WTC11 (cell line): ENCODE measurements at regions of chr1 and their contacts with region 1.

Region 1: GRCh38 chr1:226121587-226122400 is 59.3 kb downstream of the H3-3A start:
- DNase-seq: peak; percentile 89
- ATAC-seq: peak; percentile 74
- H3K4me3 Mint-ChIP-seq: peak overlapping the region; percentile 83
- H3K27ac Mint-ChIP-seq: no peak overlapping the region
- H3K4me1 Mint-ChIP-seq: peaks cover 49% of the 10 kb centered on the region
- H3K27me3 Mint-ChIP-seq: peaks cover 20% of the 10 kb centered on the region
- CTCF ChIP-seq: peak; percentile 93

Region 2: DNA sequence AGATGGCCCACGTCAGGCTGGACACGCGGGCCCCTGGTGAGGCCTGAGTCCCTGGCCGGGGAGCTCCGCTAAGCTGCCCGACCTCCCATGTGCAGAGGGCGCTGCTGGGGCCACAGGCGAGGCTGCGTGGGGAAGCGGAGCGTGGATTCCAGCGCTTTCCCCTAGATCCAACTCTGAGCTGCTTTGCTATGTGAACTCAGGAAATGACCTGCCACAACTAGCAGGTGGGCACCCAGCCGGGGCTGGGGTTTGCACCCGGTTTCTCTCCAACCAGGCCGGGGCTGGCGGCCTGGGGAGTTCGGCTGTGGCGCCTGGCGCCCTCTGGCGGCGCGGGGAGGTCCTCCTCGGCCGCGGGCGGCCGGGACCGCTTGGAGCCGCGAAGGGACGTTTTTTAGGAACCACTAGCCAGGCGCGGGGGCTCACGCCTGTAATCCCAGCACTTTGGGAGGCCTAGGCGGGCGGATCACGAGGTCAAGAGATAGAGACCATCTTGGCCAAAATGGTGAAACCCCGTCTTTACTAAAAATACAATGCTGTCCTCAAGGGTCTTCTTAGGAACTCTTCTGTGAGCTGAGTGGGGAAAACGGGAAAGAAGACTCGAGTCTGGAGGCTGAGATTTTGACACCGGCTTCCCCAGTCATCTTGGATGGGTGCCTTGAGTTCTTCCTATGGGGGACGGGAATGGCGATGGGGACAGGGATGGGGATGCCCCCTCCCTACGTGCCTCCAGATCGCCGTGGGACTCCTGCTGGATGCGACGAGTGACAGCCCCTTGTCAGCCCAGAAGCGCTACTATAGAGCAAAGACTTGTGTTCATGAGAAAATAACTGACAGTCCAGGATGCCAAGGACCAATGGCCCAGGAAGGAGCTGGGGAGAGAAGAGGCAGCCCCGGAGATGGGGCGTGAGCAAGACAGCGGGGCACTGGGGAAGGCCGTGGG is 210.3 kb before region 1 on chr1:
- CTCF ChIA-PET with region 1: no interaction called
- POLR2A ChIA-PET with region 1: no interaction called
- DNase-seq: peak; percentile 84
- ATAC-seq: peak; percentile 82
- H3K4me3 Mint-ChIP-seq: no peak overlapping the region
- H3K27ac Mint-ChIP-seq: no peak overlapping the region
- H3K4me1 Mint-ChIP-seq: peaks cover 43% of the 10 kb centered on the region
- H3K27me3 Mint-ChIP-seq: peaks cover 12% of the 10 kb centered on the region
- CTCF ChIP-seq: peak; percentile 93

Region 3: GRCh38 chr1:226100436-226101391 is 21.1 kb before region 1 on chr1:
- CTCF ChIA-PET with region 1: interaction called, 23 read pairs
- POLR2A ChIA-PET with region 1: no interaction called
- DNase-seq: peak; percentile 61
- ATAC-seq: peak; percentile 47
- H3K4me3 Mint-ChIP-seq: peak overlapping the region; percentile 76
- H3K27ac Mint-ChIP-seq: no peak overlapping the region
- H3K4me1 Mint-ChIP-seq: peaks cover 39% of the 10 kb centered on the region
- H3K27me3 Mint-ChIP-seq: peaks cover 17% of the 10 kb centered on the region
- CTCF ChIP-seq: no peak

Region 4: GRCh38 chr1:226149806-226150205 is 28.0 kb after region 1 on chr1:
- CTCF ChIA-PET with region 1: interaction called, 33 read pairs
- POLR2A ChIA-PET with region 1: no interaction called
- DNase-seq: no peak
- ATAC-seq: peak; percentile 56; the same call in 1 of the 2 replicates
- H3K4me3 Mint-ChIP-seq: no peak overlapping the region
- H3K27ac Mint-ChIP-seq: no peak overlapping the region
- H3K4me1 Mint-ChIP-seq: no peaks in the 10 kb centered on the region
- H3K27me3 Mint-ChIP-seq: no peaks in the 10 kb centered on the region
- CTCF ChIP-seq: no peak

Region 5: DNA sequence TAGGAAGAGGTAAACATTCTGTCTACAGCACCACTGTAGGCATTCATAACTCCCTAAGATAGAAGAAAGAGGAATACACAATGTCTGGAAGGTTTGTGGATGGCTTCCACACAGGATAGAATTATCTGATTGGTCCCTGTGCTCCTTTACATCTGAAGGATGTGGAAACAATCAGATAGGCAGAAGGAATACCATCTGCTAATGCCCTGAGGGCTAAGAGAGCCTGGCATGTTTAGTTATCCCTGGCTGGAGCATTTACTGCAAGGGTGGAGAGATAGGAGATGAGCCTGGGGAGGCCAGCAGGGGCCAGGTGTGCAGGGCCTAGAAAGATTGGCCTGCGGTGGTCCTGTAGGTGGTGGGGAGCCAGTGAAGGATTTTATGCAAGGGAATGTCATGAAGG is 73.3 kb after region 1 on chr1:
- CTCF ChIA-PET with region 1: interaction called, 92 read pairs
- POLR2A ChIA-PET with region 1: no interaction called
- DNase-seq: no peak
- ATAC-seq: no peak
- H3K4me3 Mint-ChIP-seq: no peak overlapping the region
- H3K27ac Mint-ChIP-seq: peak overlapping the region; percentile 21; the same call in 1 of the 2 replicates
- H3K4me1 Mint-ChIP-seq: 0 out of 2 replicates have a peak, but pooled peaks cover 3% of the 10 kb centered on the region
- H3K27me3 Mint-ChIP-seq: no peaks in the 10 kb centered on the region; the same call in 1 of the 2 replicates
- CTCF ChIP-seq: no peak

Region 6: DNA sequence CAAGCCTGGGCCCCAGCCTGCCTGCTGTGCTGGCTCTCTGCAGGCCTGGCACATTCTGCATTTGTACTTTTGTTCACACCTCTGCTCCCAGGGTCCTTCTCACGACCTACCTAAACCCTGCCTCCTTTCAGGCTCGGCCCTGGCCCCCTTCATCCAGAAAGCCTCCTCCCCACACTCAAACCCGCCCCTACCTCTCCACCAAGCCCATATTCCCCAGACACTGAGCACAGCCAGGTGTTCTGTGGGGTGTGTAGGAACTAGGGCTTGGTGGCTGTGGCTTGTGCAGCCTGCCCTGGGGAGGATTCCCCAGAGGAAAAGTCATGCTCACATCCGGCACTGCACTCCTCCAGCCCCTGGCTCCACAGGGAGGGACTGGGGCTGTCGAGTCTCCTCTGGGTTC is 93.4 kb after region 1 on chr1:
- CTCF ChIA-PET with region 1: interaction called, 17 read pairs
- POLR2A ChIA-PET with region 1: no interaction called
- DNase-seq: no peak
- ATAC-seq: peak; percentile 59
- H3K4me3 Mint-ChIP-seq: no peak overlapping the region
- H3K27ac Mint-ChIP-seq: peak overlapping the region; percentile 40
- H3K4me1 Mint-ChIP-seq: peaks cover 60% of the 10 kb centered on the region
- H3K27me3 Mint-ChIP-seq: peaks cover 4% of the 10 kb centered on the region
- CTCF ChIP-seq: no peak

Region 7: DNA sequence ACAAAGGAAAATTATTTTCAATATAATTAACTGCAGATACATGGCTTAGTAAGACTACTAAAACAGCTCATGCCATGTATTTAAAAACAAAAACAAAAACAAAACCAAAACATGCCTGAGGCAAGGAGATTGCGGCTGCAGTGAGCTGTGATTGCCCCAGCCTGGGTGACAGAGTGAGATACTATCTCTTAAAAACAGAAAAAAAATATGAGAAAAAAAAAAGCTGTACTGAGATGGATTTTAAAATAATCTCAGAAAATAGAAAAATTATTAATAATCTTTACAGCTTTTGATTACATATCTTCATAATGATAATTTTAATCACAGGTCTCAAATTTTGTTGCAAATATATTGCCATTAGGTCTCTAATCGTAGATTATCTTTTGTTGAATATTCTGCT is 211.2 kb after region 1 on chr1:
- CTCF ChIA-PET with region 1: interaction called, 40 read pairs
- POLR2A ChIA-PET with region 1: no interaction called
- DNase-seq: no peak
- ATAC-seq: peak; percentile 37
- H3K4me3 Mint-ChIP-seq: peak overlapping the region; percentile 46
- H3K27ac Mint-ChIP-seq: peak overlapping the region; percentile 75; the same call in 1 of the 2 replicates
- H3K4me1 Mint-ChIP-seq: peaks cover 7% of the 10 kb centered on the region
- H3K27me3 Mint-ChIP-seq: no peaks in the 10 kb centered on the region
- CTCF ChIP-seq: no peak